ENCODE measurements at regions of chr17 and their contacts with region 1.

Region 1: GRCh38 chr17:17859909-17860765 is 23.4 kb upstream of the SREBF1 start:
- DNase-seq: peak; percentile 79
- H3K4me3 Mint-ChIP-seq: no peak overlapping the region
- H3K27ac Mint-ChIP-seq: no peak overlapping the region
- H3K4me1 Mint-ChIP-seq: peaks cover 27% of the 10 kb centered on the region
- H3K27me3 Mint-ChIP-seq: no peaks in the 10 kb centered on the region

Region 2: DNA sequence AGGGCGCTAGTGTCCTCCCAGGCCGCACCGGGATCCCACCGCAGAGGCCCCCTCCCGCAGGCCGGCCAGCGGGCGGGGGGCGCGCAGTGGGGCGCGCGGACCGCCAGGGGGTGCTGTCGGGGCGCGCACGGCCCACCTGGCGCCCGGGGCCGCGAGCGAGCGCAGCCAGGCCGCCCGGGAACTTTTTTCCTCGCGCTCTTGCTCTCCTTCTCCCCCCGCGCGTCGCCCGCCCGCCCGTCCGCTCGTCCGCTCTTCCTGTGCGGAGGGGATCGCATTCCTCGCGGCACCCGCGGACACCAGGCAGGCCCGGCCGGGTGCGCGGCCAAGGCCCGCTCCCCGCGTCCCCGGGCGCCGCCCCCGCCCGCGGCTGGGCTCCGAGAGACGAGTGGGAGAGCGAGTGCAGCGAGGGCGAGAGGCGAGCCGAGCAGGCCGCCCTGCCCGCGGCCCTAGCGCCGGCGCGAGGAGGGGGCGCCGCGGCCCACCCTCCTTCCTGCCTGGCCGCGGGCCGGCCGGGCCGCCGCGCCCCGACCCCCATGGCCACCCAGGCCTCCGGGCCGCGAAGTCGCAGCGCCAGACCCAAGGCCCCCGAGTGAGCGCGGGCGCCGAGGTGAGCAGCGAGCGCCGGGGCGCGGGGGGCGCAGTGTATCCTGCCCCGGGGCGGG is 178.8 kb before region 1 on chr17 and contains the start of gene RAI1:
- CTCF ChIA-PET with region 1: interaction called, 21 read pairs
- POLR2A ChIA-PET with region 1: no interaction called
- intact Hi-C with region 1: loop called (anchors 1 kb)
- DNase-seq: peak; percentile 77
- H3K4me3 Mint-ChIP-seq: peak within 1 kb of the TSS; percentile 87
- H3K27ac Mint-ChIP-seq: peak within 1 kb of the TSS; percentile 78
- H3K4me1 Mint-ChIP-seq: peaks cover 24% of the 10 kb centered on the region
- H3K27me3 Mint-ChIP-seq: no peaks in the 10 kb centered on the region
- total RNA-seq, gene RAI1: 10.5 to 11.0 TPM

Region 3: DNA sequence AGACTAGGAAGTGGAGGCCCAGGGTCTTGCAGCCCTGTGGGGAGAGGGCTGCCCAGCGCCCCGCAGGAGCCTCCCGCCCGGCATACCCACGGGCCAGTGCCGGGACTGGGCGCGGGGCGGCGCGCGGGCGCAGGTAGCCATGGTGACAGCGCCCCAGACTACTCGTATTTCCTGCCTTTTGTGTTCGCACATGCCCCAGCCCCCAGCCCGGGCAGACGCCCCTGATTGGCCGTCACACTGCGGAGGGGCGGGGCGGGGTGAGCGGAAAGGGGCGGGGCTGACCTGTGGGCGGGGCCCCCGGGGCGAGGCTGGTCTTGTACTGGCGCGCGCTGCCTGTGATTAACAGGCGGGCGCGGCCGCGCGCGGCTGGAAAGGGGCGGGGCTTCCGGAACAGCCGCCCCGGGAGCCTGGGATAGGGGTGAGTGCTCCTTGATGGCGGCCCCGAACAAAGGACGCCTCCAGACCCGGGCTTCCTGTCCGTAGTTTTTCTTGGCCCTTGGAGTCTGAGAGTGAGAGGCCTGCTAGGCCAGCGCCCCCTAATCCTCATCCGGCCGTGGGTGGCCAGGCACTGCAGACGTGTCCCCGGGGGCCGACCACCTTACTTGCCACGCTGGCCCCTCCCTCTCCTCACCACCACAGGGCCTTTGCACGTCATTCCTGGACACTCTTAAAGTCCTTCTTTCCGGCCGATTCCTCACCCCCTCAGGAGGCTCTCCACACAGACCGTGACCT is 107.9 kb before region 1 on chr17:
- CTCF ChIA-PET with region 1: no interaction called
- POLR2A ChIA-PET with region 1: no interaction called
- intact Hi-C with region 1: loop called (anchors 2 kb)
- DNase-seq: peak; percentile 99
- H3K4me3 Mint-ChIP-seq: peak overlapping the region; percentile 96
- H3K27ac Mint-ChIP-seq: peak overlapping the region; percentile 93
- H3K4me1 Mint-ChIP-seq: peaks cover 39% of the 10 kb centered on the region
- H3K27me3 Mint-ChIP-seq: no peaks in the 10 kb centered on the region

Region 4: GRCh38 chr17:17823433-17824118 is 36.6 kb before region 1 on chr17:
- CTCF ChIA-PET with region 1: interaction called, 14 read pairs
- POLR2A ChIA-PET with region 1: interaction called, 7 read pairs
- intact Hi-C with region 1: loop called (anchors 1 kb)
- DNase-seq: peak; percentile 89
- H3K4me3 Mint-ChIP-seq: peak overlapping the region; percentile 68
- H3K27ac Mint-ChIP-seq: peak overlapping the region; percentile 92
- H3K4me1 Mint-ChIP-seq: peaks cover 94% of the 10 kb centered on the region
- H3K27me3 Mint-ChIP-seq: no peaks in the 10 kb centered on the region

Region 5: GRCh38 chr17:17849845-17850373 is 10.2 kb before region 1 on chr17:
- CTCF ChIA-PET with region 1: interaction called, 15 read pairs
- POLR2A ChIA-PET with region 1: no interaction called
- intact Hi-C with region 1: no loop called
- DNase-seq: peak; percentile 93
- H3K4me3 Mint-ChIP-seq: no peak overlapping the region
- H3K27ac Mint-ChIP-seq: peak overlapping the region; percentile 97
- H3K4me1 Mint-ChIP-seq: peaks cover 70% of the 10 kb centered on the region
- H3K27me3 Mint-ChIP-seq: no peaks in the 10 kb centered on the region

Region 6: DNA sequence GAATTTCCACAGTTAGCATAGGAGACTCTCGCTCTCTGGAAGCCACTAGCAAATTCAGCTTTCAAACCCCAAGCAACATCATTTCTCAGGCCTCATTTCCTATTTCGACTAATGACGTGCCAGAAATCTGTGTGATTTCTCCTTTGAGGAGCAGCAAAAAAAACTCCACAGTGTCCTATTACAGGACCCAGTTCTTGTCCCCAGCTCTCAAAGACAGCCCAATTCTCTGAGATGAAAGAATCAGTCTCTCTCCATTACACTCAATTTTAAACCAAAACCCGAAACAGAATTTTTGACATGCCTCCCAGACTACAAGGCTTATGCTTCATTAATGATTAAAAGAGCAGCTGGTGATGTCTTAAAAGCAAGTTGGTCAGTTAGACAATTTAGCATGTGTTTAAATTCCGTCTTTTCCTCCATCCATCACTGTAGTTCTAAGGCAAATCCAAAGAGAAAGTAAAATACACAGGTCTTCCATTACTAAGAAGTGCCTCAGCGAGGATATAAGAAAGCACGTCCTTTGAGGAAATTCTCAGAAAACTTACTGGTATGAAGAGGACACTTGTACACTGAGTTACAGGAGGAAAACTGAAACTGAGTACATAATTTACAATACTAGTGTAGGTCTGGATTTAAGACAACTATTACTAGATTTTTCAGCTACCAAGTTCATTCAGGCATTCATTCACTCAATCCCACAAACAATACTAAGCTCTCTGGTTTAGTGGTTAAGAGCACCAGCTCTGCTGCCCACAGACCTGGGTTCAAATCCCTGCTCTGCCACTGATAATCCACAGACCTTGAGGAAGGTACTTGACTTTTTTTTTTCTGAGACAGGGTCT is 99.6 kb after region 1 on chr17:
- CTCF ChIA-PET with region 1: no interaction called
- POLR2A ChIA-PET with region 1: interaction called, 6 read pairs
- intact Hi-C with region 1: loop called (anchors 1 kb)
- DNase-seq: peak; percentile 63
- H3K4me3 Mint-ChIP-seq: peak overlapping the region; percentile 78
- H3K27ac Mint-ChIP-seq: peak overlapping the region; percentile 99
- H3K4me1 Mint-ChIP-seq: peaks cover 53% of the 10 kb centered on the region
- H3K27me3 Mint-ChIP-seq: no peaks in the 10 kb centered on the region

Measured in activated CD4-positive, alpha-beta memory T cell treated with anti-CD3 and anti-CD28 coated beads for 36 hours (primary cell).